ENCODE measurements at regions of chr1 and their contacts with region 1.

Region 1: DNA sequence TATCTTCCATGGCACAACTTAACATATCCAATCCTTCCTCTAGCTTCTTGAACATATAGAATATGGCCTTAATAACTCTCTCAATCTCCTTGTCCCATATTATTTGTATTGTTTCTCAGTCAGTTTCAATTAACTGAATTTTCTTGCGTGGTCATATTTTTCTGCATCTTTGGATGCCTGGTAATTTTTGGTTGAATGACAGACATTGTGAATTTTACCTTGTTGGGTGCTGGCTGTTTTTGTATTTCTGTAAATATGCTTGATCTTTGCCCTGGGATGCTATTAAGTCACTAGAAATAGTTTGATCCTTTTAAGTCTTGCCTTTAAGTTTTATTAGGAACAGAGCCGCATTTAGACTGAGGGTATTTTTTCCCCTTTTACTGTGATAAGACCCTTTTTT is 5.9 kb downstream of the SAMD13 start:
- DNase-seq: no peak

Region 2: GRCh38 chr1:84370831-84371394 is 63.5 kb after region 1 on chr1:
- intact Hi-C with region 1: loop called (anchors 5 kb)
- DNase-seq: no peak